AG04449 (cell line): ENCODE measurements at regions of chr22 and their contacts with region 1.

Region 1: DNA sequence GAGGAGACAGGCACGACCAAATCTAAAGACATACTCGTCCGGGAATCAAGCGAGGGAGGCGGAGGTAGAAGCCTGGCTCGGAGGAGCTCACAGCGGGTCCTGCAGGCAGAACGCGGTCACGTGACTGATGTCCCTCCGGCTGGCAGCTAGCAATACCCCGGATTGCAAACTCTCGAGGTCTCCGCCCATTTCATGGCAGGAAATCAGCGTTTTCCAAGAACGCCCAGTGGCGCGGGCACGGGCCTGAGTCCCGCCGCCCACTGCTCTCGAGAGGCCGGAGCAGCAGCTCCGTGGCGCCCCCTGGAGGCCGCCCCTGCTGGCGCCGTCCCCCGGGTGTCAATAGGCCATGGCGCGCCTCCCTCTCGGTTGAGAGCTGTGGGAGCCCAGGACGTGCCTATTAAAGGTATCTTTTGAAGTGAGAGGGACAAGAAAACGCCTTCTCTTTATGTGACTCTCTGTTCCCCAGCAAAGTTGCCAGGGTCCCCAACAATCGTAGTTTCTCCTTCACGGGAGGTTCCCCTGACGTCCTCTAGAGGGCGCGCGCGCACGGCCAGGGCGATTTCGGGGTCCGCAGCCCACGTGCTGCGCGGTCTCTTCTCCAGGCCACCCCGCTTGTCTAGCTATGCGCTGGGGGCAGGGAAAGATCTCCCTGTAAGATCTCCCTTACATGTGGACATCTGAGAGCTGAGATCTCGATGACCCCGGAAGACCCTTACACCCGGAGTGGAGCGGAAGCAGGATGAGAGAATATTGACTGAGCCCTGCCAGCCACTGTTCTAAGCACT is 37.3 kb upstream of the RBFOX2 start:
- DNase-seq: peak; percentile 73
- H3K4me3 ChIP-seq: peak overlapping the region; percentile 62
- CTCF ChIP-seq: peak; percentile 84

Region 2: DNA sequence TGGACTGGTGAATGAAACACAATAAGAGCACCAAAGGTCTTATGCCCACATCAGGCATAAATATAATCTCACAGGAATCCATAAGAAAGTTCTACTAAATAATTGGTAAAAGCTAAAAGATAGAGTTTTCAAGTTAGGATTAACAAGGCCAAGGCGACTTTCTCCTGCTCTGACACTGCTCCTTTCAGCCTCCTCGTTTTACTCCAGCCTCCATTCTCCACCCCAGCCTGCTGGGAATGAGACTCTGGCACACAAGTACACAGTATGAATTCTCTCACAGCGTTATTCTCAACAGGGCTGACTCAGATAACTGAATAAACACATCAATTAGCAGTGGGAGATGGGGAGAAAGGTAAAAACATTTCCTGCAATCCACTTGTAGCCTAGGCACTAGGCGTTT is 253.4 kb before region 1 on chr22:
- CTCF ChIA-PET with region 1: no interaction called
- POLR2A ChIA-PET with region 1: no interaction called
- DNase-seq: no peak
- H3K4me3 ChIP-seq: no peak overlapping the region
- CTCF ChIP-seq: no peak

Region 3: GRCh38 chr22:35840302-35840739 is 225.6 kb before region 1 on chr22:
- CTCF ChIA-PET with region 1: interaction called, 25 read pairs
- POLR2A ChIA-PET with region 1: no interaction called
- DNase-seq: peak; percentile 97
- H3K4me3 ChIP-seq: peak overlapping the region; percentile 73
- CTCF ChIP-seq: no peak

Region 4: DNA sequence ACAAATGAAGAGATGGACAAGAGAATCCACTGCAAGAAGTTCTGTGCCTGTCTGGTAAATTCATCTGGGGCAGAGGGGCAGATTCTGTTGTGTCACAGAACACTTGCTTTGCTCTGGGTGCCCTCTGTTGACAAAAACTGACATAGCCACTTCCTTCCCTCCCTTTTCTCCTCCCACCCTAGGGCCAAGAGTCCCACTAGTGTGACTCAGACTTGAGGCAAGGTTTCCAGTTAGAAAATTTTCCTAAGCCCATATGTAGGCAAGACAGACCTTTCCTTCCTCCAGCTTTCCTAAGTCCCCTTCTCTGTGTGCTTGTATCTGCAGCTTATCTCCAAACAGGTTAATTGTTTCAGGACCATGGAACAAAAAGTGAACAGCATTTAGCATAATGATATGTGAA is 144.2 kb before region 1 on chr22:
- CTCF ChIA-PET with region 1: interaction called, 219 read pairs
- POLR2A ChIA-PET with region 1: interaction called, 3 read pairs
- DNase-seq: peak; percentile 60
- H3K4me3 ChIP-seq: no peak overlapping the region
- CTCF ChIP-seq: peak; percentile 55

Region 5: GRCh38 chr22:35961480-35962295 is 104.3 kb before region 1 on chr22:
- CTCF ChIA-PET with region 1: interaction called, 73 read pairs
- POLR2A ChIA-PET with region 1: no interaction called
- DNase-seq: peak; percentile 70
- H3K4me3 ChIP-seq: peak overlapping the region; percentile 27
- CTCF ChIP-seq: no peak

Region 6: GRCh38 chr22:35995772-35996171 is 70.2 kb before region 1 on chr22:
- CTCF ChIA-PET with region 1: interaction called, 38 read pairs
- POLR2A ChIA-PET with region 1: no interaction called
- DNase-seq: peak; percentile 84
- H3K4me3 ChIP-seq: no peak overlapping the region
- CTCF ChIP-seq: no peak

Region 7: DNA sequence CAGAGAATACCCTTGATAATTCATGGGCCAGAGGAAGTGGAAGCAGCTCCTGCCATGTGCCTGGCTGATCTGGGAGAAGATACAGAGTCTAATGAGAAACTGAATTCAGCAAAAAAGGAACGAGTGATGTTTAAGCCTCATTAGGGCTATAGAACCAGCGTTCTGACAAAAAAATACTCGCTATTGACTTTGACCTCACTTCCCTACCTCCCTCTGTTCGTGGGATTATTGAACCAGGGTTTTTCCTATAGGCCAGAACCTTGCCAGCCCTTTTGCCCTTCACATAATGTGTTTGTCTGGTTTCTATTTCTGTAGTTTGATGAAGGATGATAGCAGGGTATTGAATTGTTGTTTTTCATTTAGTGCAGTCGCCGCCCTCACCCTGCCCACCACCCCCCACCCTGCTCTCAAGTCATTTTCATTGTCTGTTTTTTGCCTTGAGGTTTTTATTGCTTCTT is 29.8 kb before region 1 on chr22:
- CTCF ChIA-PET with region 1: interaction called, 17 read pairs
- POLR2A ChIA-PET with region 1: no interaction called
- DNase-seq: no peak
- H3K4me3 ChIP-seq: no peak overlapping the region
- CTCF ChIP-seq: no peak

Region 8: DNA sequence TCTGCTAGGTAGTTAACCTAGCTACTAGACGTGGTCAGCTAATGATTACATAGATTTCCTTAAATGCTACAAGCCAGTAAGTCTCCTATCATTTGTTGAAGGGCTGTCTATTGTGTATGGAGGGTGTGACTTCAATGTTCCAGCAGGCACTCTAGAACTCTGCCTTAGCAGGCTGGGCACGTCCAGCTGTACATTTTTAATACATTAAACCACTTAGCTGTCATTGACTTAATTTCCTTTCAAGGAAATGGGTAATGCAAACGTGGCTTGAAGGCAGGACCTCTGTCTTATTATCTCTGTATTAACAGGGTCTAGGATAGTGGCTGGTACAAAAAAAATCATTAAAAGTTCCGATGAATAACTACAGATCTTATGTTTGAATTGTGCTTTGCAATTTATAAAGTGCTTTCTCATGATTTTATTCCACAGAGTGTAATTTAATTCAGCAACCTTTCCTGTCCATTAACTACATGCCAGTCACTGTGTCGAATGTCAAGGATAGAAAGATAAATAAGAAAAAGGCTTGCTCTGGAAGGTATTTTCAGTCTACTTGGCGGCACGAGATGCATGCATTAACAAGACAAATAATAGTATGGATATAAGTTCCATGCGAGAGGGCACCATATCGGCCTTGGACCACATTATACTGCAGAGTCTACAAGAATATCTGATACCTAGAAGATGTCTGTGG is 34.3 kb after region 1 on chr22:
- CTCF ChIA-PET with region 1: interaction called, 15 read pairs
- POLR2A ChIA-PET with region 1: no interaction called
- DNase-seq: no peak
- H3K4me3 ChIP-seq: no peak overlapping the region
- CTCF ChIP-seq: no peak